Common myeloid progenitor, CD34-positive (primary cell): ENCODE measurements at regions of chr17 and their contacts with region 1.

Region 1: DNA sequence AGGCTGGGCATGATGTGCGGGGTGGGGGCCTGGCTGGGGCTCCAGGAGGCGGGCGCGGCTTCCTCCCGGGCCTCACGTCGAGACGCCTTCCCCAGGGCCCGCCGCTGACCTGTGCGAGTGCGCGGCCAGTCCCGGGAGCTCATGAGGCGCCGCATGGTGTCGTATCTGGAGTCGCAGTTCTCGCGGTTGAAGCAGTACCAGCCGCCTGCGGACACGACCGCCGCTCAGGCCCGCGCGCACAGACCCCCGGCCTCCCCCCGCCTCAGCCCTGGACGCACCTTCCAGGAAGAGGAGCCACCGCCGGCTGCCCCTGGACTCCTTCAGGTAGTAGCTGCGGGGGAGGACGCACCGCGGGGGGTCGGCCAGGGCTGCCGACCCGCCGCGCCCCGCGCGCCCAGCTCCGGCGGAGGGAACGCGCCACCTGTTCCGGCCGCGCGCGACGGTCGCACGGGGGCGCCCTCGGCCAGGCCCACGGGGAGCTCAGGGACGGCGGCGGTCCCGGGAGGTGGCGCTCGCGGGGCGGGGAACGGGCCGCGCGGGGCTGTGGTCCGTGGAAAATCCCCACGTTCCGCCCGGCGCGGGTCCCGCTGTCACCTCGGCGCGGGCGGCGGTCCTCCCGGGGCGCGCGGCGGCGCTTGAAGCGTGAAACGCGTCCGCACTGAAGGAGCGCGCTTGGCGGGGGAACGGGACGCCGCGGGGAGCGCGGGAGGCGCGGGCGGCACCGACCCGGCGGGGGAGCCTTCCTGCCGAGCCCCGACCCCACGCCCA is 1.4 kb downstream of the NOTUM start:
- DNase-seq: peak; percentile 54 to 73 (median 72)
- H3K4me3 ChIP-seq: peak overlapping the region in 6 of 7 experiments; percentile 9 to 61 (median 40)
- H3K27ac ChIP-seq: no peak overlapping the region
- H3K4me1 ChIP-seq: peaks cover 0 to 22% (median 19%) of the 10 kb centered on the region in 4 experiments
- H3K27me3 ChIP-seq: peaks cover 0 to 63% (median 21%) of the 10 kb centered on the region in 5 experiments

Region 2: DNA sequence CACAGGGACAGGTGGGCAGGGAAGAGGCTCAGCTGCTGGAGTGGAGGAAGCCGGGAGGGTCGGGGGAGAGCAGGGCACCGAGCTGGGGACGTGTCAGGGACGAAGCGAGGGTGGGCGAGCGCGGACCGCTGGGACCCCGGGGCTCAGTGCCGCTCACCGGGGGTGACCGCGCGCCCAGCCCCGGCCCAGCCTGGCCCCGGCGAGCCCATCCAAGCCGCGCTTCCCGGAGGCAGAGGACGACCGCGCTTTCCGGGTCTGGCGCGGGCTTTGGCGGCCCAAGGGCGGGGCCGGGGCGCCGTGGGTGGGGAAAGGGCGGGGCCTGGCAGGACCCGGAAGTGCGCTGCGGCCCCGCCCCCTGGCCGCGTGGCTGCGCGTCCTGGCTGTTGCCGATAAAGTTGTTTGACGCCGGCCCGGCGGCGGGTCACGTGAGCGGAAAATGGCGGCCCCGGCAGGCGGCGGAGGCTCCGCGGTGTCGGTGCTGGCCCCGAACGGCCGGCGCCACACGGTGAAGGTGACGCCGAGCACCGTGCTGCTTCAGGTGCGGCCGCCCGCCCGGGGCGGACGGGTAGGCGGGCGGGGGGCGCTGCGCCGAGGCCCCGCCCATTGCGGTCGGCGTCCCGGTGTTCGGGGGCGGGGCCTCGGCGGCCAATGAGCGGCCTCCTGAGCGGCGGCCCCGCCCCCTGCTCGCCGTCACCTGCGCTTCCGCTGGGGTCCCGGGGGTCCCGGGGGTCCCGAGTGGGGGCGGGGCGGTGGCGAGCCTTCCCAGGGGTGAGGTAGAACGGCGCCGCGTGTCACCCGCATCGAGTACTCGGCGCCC is 17.9 kb after region 1 on chr17 and contains the start of gene ASPSCR1:
- CTCF ChIA-PET with region 1: interaction called, 13 read pairs
- POLR2A ChIA-PET with region 1: interaction called, 3 read pairs
- DNase-seq: peak; percentile 88 to 92 (median 91)
- H3K4me3 ChIP-seq: peak within 1 kb of the TSS; percentile 63 to 86 (median 73)
- H3K27ac ChIP-seq: peak within 1 kb of the TSS; percentile 64 to 85
- H3K4me1 ChIP-seq: peaks cover 10 to 49% (median 35%) of the 10 kb centered on the region in 4 experiments
- H3K27me3 ChIP-seq: peaks cover 0 to 3% (median 0%) of the 10 kb centered on the region in 5 experiments

Region 3: DNA sequence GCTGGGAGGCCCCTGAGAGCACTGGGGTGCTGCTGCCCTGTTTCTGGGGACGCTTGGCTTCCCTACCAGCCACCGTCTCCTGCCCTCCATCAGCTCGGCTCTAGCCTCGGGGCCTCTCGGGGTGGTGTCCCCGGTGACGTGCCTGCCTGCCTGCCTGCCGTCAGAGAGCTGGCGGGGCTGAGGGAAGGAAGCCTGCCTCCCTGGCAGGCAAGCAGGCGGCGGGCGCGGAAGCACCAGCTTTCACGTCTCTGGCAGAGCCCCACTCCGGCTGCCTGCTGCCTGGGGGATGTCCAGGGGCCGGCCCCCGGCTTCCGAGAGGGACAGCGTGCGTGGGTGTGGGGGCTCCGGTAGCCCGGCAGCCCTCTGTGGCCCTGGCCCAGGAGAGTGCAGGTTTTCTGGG is 53.8 kb after region 1 on chr17:
- CTCF ChIA-PET with region 1: interaction called, 117 read pairs
- POLR2A ChIA-PET with region 1: interaction called, 3 read pairs
- DNase-seq: peak in 2 of 3 donors; percentile 73 to 80
- H3K4me3 ChIP-seq: no peak overlapping the region
- H3K27ac ChIP-seq: no peak overlapping the region
- H3K4me1 ChIP-seq: peaks cover 0 to 41% (median 35%) of the 10 kb centered on the region in 4 experiments
- H3K27me3 ChIP-seq: no peaks in the 10 kb centered on the region